Mammary epithelial cell (primary cell): ENCODE measurements at regions of chr1 and their contacts with region 1.

Region 1: DNA sequence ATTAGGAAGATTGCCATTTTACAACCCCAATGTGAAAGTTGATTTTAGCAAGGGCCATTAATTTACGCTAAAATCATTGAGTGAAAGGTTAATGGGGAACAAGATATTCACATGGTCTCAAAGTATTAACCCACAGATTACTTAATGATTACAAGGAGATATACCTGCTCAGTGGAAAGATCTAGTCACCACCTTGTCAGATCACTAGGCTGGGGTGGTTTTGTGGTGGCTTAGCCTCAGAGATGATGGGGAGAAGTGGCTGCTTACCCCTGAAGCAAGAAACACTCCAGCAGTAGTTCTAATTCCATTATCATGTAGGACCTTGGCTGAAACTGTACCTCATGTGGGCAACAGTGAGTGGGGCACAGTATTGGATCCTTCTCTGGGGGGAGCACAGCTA is 20.1 kb upstream of the TRIM33 start:
- DNase-seq: no peak
- H3K4me3 ChIP-seq: no peak overlapping the region
- H3K27ac ChIP-seq: no peak overlapping the region
- H3K4me1 ChIP-seq: no peaks in the 10 kb centered on the region
- H3K27me3 ChIP-seq: no peaks in the 10 kb centered on the region
- CTCF ChIP-seq: no peak

Region 2: GRCh38 chr1:114192329-114192728 is 338.8 kb before region 1 on chr1:
- CTCF ChIA-PET with region 1: no interaction called
- dilution Hi-C with region 1: loop called (anchors 10 kb)
- in situ Hi-C with region 1: no loop called
- intact Hi-C with region 1: no loop called
- DNase-seq: no peak
- H3K4me3 ChIP-seq: no peak overlapping the region
- H3K27ac ChIP-seq: no peak overlapping the region
- H3K4me1 ChIP-seq: no peaks in the 10 kb centered on the region
- H3K27me3 ChIP-seq: peaks cover 8% of the 10 kb centered on the region
- CTCF ChIP-seq: no peak

Region 3: GRCh38 chr1:114353262-114353661 is 177.8 kb before region 1 on chr1:
- CTCF ChIA-PET with region 1: no interaction called
- dilution Hi-C with region 1: no loop called
- in situ Hi-C with region 1: no loop called
- intact Hi-C with region 1: no loop called
- DNase-seq: peak; percentile 48
- H3K4me3 ChIP-seq: no peak overlapping the region
- H3K27ac ChIP-seq: no peak overlapping the region
- H3K4me1 ChIP-seq: no peaks in the 10 kb centered on the region
- H3K27me3 ChIP-seq: no peaks in the 10 kb centered on the region
- CTCF ChIP-seq: no peak